Dorsolateral prefrontal cortex (tissue), 120 donors: ENCODE measurements at regions of chr5 and their contacts with region 1.

Region 1: GRCh38 chr5:74640450-74640953 is at the start of gene ENC1:
- DNase-seq: peak; percentile 56 to 89 (median 77)
- H3K4me3 ChIP-seq: peak within 1 kb of the TSS; percentile 59 to 97 (median 82)
- H3K27ac ChIP-seq: peak within 1 kb of the TSS; percentile 35 to 98 (median 91)
- H3K27me3 ChIP-seq: no peaks in the 10 kb centered on the region
- CTCF ChIP-seq: peak in 54 of 56 donors; percentile 26 to 62 (median 48)
- total RNA-seq, gene ENC1: 140 to 1,050 (median 576) TPM

Region 2: DNA sequence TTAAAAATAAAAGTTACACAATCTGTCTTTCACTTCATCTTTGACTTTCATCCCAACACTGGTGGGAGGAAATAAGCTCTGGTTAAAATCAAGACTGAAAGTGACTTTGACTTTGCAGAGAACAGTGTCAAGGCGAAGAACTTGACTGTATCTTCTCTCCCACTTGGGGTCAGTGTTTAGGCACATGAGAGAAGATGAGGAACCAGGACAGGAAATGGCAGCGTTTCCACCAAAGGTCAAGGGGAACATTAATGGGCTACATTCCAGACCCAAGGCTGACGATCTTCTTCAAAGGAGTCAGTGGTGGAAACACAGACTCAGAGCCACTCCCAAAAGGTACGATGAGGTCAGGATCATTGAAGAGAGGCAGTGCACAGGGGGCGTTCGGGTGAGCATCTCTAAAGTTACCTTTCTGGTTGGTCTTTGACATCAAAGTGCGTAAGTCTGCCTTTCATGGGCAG is 605.0 kb before region 1 on chr5:
- intact Hi-C with region 1: loop called (anchors 2 to 5 kb)
- DNase-seq: peak in 1 of 10 donors; percentile 14
- H3K4me3 ChIP-seq: no peak overlapping the region
- H3K27ac ChIP-seq: peak overlapping the region in 38 of 59 donors; percentile 0 to 71 (median 52)
- H3K27me3 ChIP-seq: peaks cover 0 to 9% (median 0%) of the 10 kb centered on the region in 45 donors
- CTCF ChIP-seq: peak in 51 of 56 donors; percentile 19 to 65 (median 41)

Region 3: DNA sequence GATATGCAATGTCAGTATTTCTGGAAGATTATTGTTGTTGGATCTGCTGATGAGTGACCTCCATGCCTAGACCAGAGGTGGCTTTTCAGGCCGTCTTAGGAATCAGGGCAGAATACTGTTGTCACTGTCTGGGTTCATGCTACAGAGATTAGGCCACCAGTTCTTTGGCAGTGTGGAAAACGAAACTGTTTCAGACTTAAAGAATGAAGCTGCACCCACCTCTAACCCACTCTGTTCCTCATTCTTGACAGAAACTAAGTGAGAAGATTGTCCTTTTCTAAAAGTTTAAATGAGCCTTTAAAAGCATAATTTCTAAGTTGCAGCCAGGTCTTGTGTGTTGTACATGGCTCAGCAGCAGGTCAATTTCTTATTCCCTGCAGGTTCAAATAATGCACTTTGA is 444.3 kb before region 1 on chr5:
- intact Hi-C with region 1: loop called in 1 of 2 experiments (anchors 10 kb)
- DNase-seq: no peak
- H3K4me3 ChIP-seq: no peak overlapping the region
- H3K27ac ChIP-seq: no peak overlapping the region
- H3K27me3 ChIP-seq: no peaks in the 10 kb centered on the region
- CTCF ChIP-seq: no peak

Region 4: DNA sequence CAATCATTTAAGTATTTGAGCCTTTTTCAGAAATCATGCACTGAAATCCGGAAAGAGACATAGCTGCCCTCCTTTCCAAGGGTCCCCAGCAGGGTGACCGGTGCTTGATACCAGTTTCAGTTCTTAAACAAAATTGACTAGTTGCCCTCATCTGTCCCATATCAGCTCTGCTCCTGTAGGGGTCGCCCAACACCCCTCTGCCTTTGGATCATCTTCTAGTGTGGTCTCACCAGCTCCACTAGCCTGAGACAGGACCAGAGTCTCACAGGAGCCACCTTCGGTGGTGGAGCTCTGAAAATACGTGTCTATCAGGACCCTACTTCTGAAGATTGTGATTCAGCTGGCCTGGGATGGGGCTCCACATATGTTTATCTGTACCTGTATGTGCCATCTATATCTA is 428.2 kb before region 1 on chr5:
- intact Hi-C with region 1: loop called in 1 of 2 experiments (anchors 10 kb)
- DNase-seq: no peak
- H3K4me3 ChIP-seq: no peak overlapping the region
- H3K27ac ChIP-seq: no peak overlapping the region
- H3K27me3 ChIP-seq: no peaks in the 10 kb centered on the region
- CTCF ChIP-seq: no peak

Region 5: GRCh38 chr5:74408150-74409043 is 232.1 kb before region 1 on chr5:
- intact Hi-C with region 1: loop called (anchors 10 kb)
- DNase-seq: no peak
- H3K4me3 ChIP-seq: no peak overlapping the region
- H3K27ac ChIP-seq: peak overlapping the region in 2 of 59 donors; percentile 3 to 10
- H3K27me3 ChIP-seq: no peaks in the 10 kb centered on the region
- CTCF ChIP-seq: no peak